GM12878 (cell line): ENCODE measurements at regions of chr6 and their contacts with region 1.

Region 1: GRCh38 chr6:41298785-41299502 is 12.5 kb upstream of the TREM1 start:
- DNase-seq: no peak
- ATAC-seq: peak; percentile 42; the same call in 2 of the 3 replicates
- H3K4me3 ChIP-seq: no peak overlapping the region
- H3K27ac ChIP-seq: no peak overlapping the region
- H3K4me1 ChIP-seq: peaks cover 7% of the 10 kb centered on the region
- H3K27me3 ChIP-seq: no peaks in the 10 kb centered on the region
- CTCF ChIP-seq: no peak
- EP300 ChIP-seq: no peak
- POLR2A ChIP-seq: no peak
- RAD21 ChIP-seq: no peak

Region 2: GRCh38 chr6:40804905-40805304 is 494.0 kb before region 1 on chr6:
- CTCF ChIA-PET with region 1: no interaction called
- POLR2A ChIA-PET with region 1: no interaction called
- RAD21 ChIA-PET with region 1: no interaction called
- SMC1A ChIA-PET with region 1: no interaction called
- in situ Hi-C with region 1: no loop called
- intact Hi-C with region 1: no loop called
- DNase-seq: no peak
- ATAC-seq: no peak
- H3K4me3 ChIP-seq: no peak overlapping the region
- H3K27ac ChIP-seq: no peak overlapping the region
- H3K4me1 ChIP-seq: peaks cover 16% of the 10 kb centered on the region
- H3K27me3 ChIP-seq: no peaks in the 10 kb centered on the region
- CTCF ChIP-seq: peak; percentile 8 to 41 (median 21); a peak in 4 of 6 replicates
- EP300 ChIP-seq: no peak
- POLR2A ChIP-seq: no peak
- RAD21 ChIP-seq: peak; percentile 5; the same call in 1 of the 2 replicates

Region 3: GRCh38 chr6:41200296-41200900 is 98.5 kb before region 1 on chr6:
- CTCF ChIA-PET with region 1: interaction called, 4 read pairs
- POLR2A ChIA-PET with region 1: no interaction called
- RAD21 ChIA-PET with region 1: interaction called, 10 read pairs
- SMC1A ChIA-PET with region 1: interaction called, 6 read pairs
- in situ Hi-C with region 1: no loop called
- intact Hi-C with region 1: no loop called
- DNase-seq: peak; percentile 58
- ATAC-seq: peak; percentile 56
- H3K4me3 ChIP-seq: peak overlapping the region; percentile 37
- H3K27ac ChIP-seq: peak overlapping the region; percentile 94
- H3K4me1 ChIP-seq: peaks cover 32% of the 10 kb centered on the region
- H3K27me3 ChIP-seq: no peaks in the 10 kb centered on the region
- CTCF ChIP-seq: no peak
- EP300 ChIP-seq: no peak
- POLR2A ChIP-seq: no peak
- RAD21 ChIP-seq: no peak

Region 4: DNA sequence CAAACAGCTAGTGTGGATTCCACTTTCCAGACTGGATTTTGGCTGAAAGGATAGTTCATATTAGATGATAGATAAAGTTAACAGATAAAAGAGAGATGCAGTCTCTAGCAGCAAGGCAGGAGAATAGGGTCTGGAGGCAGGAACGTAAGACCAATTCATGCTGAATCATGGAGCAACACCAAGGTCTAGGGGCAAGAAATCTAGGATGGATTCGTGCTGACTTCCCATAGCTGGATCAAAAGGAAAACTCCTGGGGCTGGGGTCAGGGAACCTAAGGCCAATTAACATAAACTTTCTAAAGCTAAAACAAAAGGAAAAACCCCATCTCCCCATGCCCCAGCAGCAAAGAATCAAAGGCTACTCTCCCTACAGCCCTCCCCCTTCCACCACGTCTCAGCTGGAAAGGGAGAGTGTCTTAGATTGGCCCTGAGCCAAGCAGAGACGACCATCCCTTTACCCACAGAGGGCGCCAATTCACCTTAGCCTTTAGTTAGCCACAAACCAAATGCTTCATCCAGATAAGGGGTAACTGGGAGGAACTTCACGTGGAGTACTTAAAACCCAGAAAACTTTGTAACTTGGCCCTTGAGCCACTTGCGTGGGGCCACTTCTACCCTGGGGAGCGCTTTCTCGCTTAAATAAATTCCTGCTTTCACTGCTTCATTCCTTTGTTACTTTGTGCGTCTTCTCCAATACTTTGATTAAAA is 20.1 kb before region 1 on chr6:
- CTCF ChIA-PET with region 1: interaction called, 68 read pairs
- POLR2A ChIA-PET with region 1: no interaction called
- RAD21 ChIA-PET with region 1: interaction called, 10 read pairs
- SMC1A ChIA-PET with region 1: interaction called, 18 read pairs
- in situ Hi-C with region 1: no loop called
- intact Hi-C with region 1: no loop called
- DNase-seq: no peak
- ATAC-seq: peak; percentile 78
- H3K4me3 ChIP-seq: no peak overlapping the region
- H3K27ac ChIP-seq: no peak overlapping the region
- H3K4me1 ChIP-seq: no peaks in the 10 kb centered on the region
- H3K27me3 ChIP-seq: no peaks in the 10 kb centered on the region
- CTCF ChIP-seq: peak; percentile 58 to 65 (median 65)
- EP300 ChIP-seq: no peak
- POLR2A ChIP-seq: no peak
- RAD21 ChIP-seq: peak; percentile 79

Region 5: GRCh38 chr6:41286544-41287346 is 12.2 kb before region 1 on chr6 and contains the start of gene TREM1:
- CTCF ChIA-PET with region 1: interaction called, 53 read pairs
- POLR2A ChIA-PET with region 1: interaction called, 6 read pairs
- RAD21 ChIA-PET with region 1: interaction called, 14 read pairs
- SMC1A ChIA-PET with region 1: interaction called, 33 read pairs
- in situ Hi-C with region 1: no loop called
- intact Hi-C with region 1: no loop called
- DNase-seq: no peak
- ATAC-seq: no peak
- H3K4me3 ChIP-seq: no peak within 1 kb of the TSS
- H3K27ac ChIP-seq: no peak within 1 kb of the TSS
- H3K4me1 ChIP-seq: no peaks in the 10 kb centered on the region
- H3K27me3 ChIP-seq: no peaks in the 10 kb centered on the region
- CTCF ChIP-seq: no peak
- EP300 ChIP-seq: no peak
- POLR2A ChIP-seq: no peak
- RAD21 ChIP-seq: no peak
- polyA plus RNA-seq, gene TREM1: 0.11 to 0.69 TPM